ENCODE measurements at regions of chr2 and their contacts with region 1.

Region 1: DNA sequence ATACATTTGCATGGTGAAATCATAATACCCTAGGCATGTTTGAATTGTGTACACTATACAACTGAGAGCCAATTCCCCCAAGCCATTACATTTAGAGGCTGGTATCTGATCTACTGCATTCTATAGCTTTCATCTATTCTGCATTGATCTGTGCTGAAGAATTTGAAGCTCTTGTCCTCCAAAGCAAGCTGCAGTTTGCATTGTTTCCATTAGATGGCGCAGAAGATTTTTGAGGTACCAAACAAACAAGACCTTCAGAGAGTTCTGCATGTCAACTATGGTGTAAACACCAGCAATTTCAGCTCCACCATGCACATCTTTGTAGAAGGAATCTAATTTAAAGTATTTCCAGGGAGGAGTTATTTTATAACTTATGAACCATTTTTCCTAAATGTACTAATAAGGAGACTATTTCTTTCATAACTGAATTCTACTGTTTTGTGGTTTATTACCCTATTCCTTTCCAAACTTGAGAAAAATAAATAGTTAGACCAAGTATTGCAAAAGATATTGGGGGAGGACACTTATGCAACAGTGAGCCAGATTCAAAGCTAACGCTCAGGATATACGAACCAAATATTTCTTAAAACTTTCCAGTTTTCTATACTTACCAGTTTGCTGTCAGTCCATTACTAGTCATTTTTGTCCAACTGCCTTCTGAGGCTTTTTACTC is 761.8 kb upstream of the ACVR2A start:
- DNase-seq: peak; percentile 75
- H3K4me3 Mint-ChIP-seq: no peak overlapping the region
- H3K27ac Mint-ChIP-seq: no peak overlapping the region
- H3K4me1 Mint-ChIP-seq: peaks cover 13% of the 10 kb centered on the region
- H3K27me3 Mint-ChIP-seq: no peaks in the 10 kb centered on the region
- CTCF ChIP-seq: peak; percentile 80

Region 2: GRCh38 chr2:146734042-146734820 is 348.8 kb before region 1 on chr2:
- CTCF ChIA-PET with region 1: interaction called, 6 read pairs
- POLR2A ChIA-PET with region 1: no interaction called
- intact Hi-C with region 1: loop called (anchors 10 kb)
- DNase-seq: peak; percentile 77
- H3K4me3 Mint-ChIP-seq: no peak overlapping the region
- H3K27ac Mint-ChIP-seq: no peak overlapping the region
- H3K4me1 Mint-ChIP-seq: no peaks in the 10 kb centered on the region
- H3K27me3 Mint-ChIP-seq: no peaks in the 10 kb centered on the region
- CTCF ChIP-seq: peak; percentile 67

Region 3: GRCh38 chr2:146806299-146807005 is 276.5 kb before region 1 on chr2:
- CTCF ChIA-PET with region 1: no interaction called
- POLR2A ChIA-PET with region 1: no interaction called
- intact Hi-C with region 1: no loop called
- DNase-seq: peak; percentile 47
- H3K4me3 Mint-ChIP-seq: no peak overlapping the region
- H3K27ac Mint-ChIP-seq: no peak overlapping the region
- H3K4me1 Mint-ChIP-seq: peaks cover 20% of the 10 kb centered on the region
- H3K27me3 Mint-ChIP-seq: no peaks in the 10 kb centered on the region
- CTCF ChIP-seq: no peak

Region 4: GRCh38 chr2:147045113-147045512 is 37.9 kb before region 1 on chr2:
- CTCF ChIA-PET with region 1: interaction called, 26 read pairs
- POLR2A ChIA-PET with region 1: interaction called, 3 read pairs
- intact Hi-C with region 1: no loop called
- DNase-seq: peak; percentile 52
- H3K4me3 Mint-ChIP-seq: no peak overlapping the region
- H3K27ac Mint-ChIP-seq: no peak overlapping the region
- H3K4me1 Mint-ChIP-seq: peaks cover 6% of the 10 kb centered on the region
- H3K27me3 Mint-ChIP-seq: no peaks in the 10 kb centered on the region
- CTCF ChIP-seq: peak; percentile 51

Region 5: GRCh38 chr2:147099837-147100720 is 17.1 kb after region 1 on chr2:
- CTCF ChIA-PET with region 1: interaction called, 6 read pairs
- POLR2A ChIA-PET with region 1: interaction called, 18 read pairs
- intact Hi-C with region 1: no loop called
- DNase-seq: peak; percentile 62
- H3K4me3 Mint-ChIP-seq: no peak overlapping the region
- H3K27ac Mint-ChIP-seq: peak overlapping the region; percentile 57
- H3K4me1 Mint-ChIP-seq: peaks cover 32% of the 10 kb centered on the region
- H3K27me3 Mint-ChIP-seq: no peaks in the 10 kb centered on the region
- CTCF ChIP-seq: no peak

Region 6: GRCh38 chr2:147135376-147135775 is 52.4 kb after region 1 on chr2:
- CTCF ChIA-PET with region 1: no interaction called
- POLR2A ChIA-PET with region 1: no interaction called
- intact Hi-C with region 1: no loop called
- DNase-seq: no peak
- H3K4me3 Mint-ChIP-seq: no peak overlapping the region
- H3K27ac Mint-ChIP-seq: no peak overlapping the region
- H3K4me1 Mint-ChIP-seq: no peaks in the 10 kb centered on the region
- H3K27me3 Mint-ChIP-seq: no peaks in the 10 kb centered on the region
- CTCF ChIP-seq: no peak

Region 7: GRCh38 chr2:147331790-147332419 is 248.9 kb after region 1 on chr2:
- CTCF ChIA-PET with region 1: interaction called, 26 read pairs
- POLR2A ChIA-PET with region 1: interaction called, 5 read pairs
- intact Hi-C with region 1: loop called (anchors 1 kb)
- DNase-seq: peak; percentile 70
- H3K4me3 Mint-ChIP-seq: no peak overlapping the region
- H3K27ac Mint-ChIP-seq: no peak overlapping the region
- H3K4me1 Mint-ChIP-seq: no peaks in the 10 kb centered on the region
- H3K27me3 Mint-ChIP-seq: no peaks in the 10 kb centered on the region
- CTCF ChIP-seq: peak; percentile 72

Region 8: GRCh38 chr2:147843864-147844696 is 761.1 kb after region 1 on chr2:
- CTCF ChIA-PET with region 1: interaction called, 6 read pairs
- POLR2A ChIA-PET with region 1: interaction called, 11 read pairs
- intact Hi-C with region 1: loop called (anchors 5 kb)
- DNase-seq: peak; percentile 86
- H3K4me3 Mint-ChIP-seq: peak overlapping the region; percentile 92
- H3K27ac Mint-ChIP-seq: peak overlapping the region; percentile 89
- H3K4me1 Mint-ChIP-seq: peaks cover 18% of the 10 kb centered on the region
- H3K27me3 Mint-ChIP-seq: no peaks in the 10 kb centered on the region
- CTCF ChIP-seq: no peak